Activated CD4-positive, alpha-beta T cell treated with anti-CD3 and anti-CD28 coated beads, Interleukin-2, amount 10 ng/mL, durations not matched to agents 7 days and 5 days (primary cell): ENCODE measurements at regions of chr18 and their contacts with region 1.

Region 1: DNA sequence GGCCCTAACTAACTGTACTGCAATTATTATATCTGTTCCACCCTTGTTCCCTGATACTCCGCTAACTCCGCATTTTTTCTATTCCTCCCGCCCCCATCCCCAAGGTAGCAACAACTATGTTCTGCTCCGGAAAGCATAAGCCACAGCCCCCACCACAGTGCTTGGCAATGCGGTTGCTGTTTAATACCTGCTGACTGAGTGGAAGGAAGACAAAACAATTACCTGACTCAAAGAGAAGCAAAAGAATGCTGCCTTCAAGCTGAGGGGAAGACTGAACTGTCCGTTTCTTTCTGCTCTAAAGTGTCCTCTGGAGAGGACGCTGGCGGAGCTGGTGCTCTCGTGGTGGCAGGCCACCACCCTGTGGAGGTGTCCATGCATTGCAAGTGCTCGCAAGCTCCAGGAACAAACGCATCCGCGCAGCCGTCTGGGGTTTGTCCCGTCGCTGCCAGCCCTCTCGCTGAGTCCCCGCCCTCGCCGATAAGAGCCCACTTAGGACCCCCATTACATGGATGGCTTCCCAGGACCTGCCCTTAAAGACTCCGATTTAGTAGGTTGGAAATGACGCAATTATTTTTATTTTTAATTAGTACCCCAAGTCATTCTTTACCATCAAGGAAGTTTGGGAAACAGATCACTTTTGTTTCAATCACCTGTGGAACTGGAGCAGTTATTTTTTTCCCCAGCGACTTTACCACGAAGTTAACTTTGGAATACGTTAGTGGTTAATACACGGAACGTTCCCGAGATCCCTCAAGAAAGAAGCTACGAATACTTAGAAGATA is 1.6 kb upstream of the MYL12A start:
- DNase-seq: peak; percentile 86
- H3K4me3 Mint-ChIP-seq: peak overlapping the region; percentile 88
- H3K27ac Mint-ChIP-seq: peak overlapping the region; percentile 99
- H3K4me1 Mint-ChIP-seq: peaks cover 23% of the 10 kb centered on the region
- H3K27me3 Mint-ChIP-seq: no peaks in the 10 kb centered on the region

Region 2: GRCh38 chr18:2948038-2948437 is 298.0 kb before region 1 on chr18:
- CTCF ChIA-PET with region 1: interaction called, 10 read pairs
- POLR2A ChIA-PET with region 1: no interaction called
- DNase-seq: no peak
- H3K4me3 Mint-ChIP-seq: no peak overlapping the region
- H3K27ac Mint-ChIP-seq: no peak overlapping the region
- H3K4me1 Mint-ChIP-seq: peaks cover 46% of the 10 kb centered on the region
- H3K27me3 Mint-ChIP-seq: no peaks in the 10 kb centered on the region

Region 3: GRCh38 chr18:2958819-2959298 is 287.2 kb before region 1 on chr18:
- CTCF ChIA-PET with region 1: interaction called, 10 read pairs
- POLR2A ChIA-PET with region 1: interaction called, 4 read pairs
- DNase-seq: peak; percentile 65
- H3K4me3 Mint-ChIP-seq: peak overlapping the region; percentile 69
- H3K27ac Mint-ChIP-seq: peak overlapping the region; percentile 97
- H3K4me1 Mint-ChIP-seq: peaks cover 91% of the 10 kb centered on the region
- H3K27me3 Mint-ChIP-seq: no peaks in the 10 kb centered on the region

Region 4: GRCh38 chr18:3151399-3152264 is 94.4 kb before region 1 on chr18:
- CTCF ChIA-PET with region 1: interaction called, 13 read pairs
- POLR2A ChIA-PET with region 1: interaction called, 3 read pairs
- DNase-seq: peak; percentile 8
- H3K4me3 Mint-ChIP-seq: no peak overlapping the region
- H3K27ac Mint-ChIP-seq: no peak overlapping the region
- H3K4me1 Mint-ChIP-seq: peaks cover 7% of the 10 kb centered on the region
- H3K27me3 Mint-ChIP-seq: peaks cover 7% of the 10 kb centered on the region

Region 5: DNA sequence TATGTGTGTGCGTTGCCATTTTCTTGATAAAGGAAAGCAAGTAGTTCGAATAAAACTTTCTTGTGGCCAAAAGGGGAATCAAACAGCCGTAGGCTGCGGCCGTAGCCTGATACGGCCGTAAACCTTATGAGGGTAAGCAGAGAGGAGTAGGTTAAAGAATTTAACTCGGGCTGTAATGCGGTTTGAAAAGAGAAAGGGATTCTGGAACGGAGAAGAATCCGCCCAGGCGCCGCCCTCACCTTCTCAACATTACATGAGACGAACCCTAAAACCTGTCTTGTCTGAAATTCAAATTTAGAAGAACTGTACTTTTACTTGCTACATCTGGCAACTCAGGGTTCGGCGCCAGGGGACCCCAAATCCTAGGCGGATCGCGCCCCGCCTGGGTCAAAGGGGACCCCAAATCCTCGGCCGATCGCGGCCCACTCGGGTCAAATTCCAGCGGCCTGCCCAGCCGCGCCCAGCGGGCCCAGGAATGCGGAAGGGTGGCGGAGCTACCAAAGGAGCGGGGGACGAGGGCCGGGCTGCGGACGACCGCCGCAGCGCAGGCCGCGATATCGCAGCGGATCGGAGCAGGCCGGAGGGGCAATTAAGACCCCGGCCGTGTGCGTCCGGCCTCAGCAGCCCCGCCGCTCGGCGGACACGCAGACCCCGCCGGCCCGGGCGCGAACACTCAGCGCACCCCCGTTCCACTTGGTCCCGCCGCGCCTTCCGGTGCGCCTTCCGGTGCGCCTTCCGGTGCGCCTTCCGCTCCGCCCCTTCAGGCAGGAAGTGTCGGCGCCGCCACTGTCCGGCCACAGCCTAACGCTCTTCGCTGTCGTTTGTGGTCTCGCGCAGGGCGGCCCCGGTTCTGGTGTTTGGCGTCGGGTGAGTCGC is 15.6 kb after region 1 on chr18 and contains the start of gene MYL12B:
- CTCF ChIA-PET with region 1: interaction called, 4 read pairs
- POLR2A ChIA-PET with region 1: interaction called, 11 read pairs
- DNase-seq: peak; percentile 82
- H3K4me3 Mint-ChIP-seq: peak within 1 kb of the TSS; percentile 86
- H3K27ac Mint-ChIP-seq: peak within 1 kb of the TSS; percentile 99
- H3K4me1 Mint-ChIP-seq: peaks cover 76% of the 10 kb centered on the region
- H3K27me3 Mint-ChIP-seq: no peaks in the 10 kb centered on the region
- total RNA-seq, gene MYL12B: 351 to 395 TPM

Region 6: GRCh38 chr18:3283908-3284307 is 37.9 kb after region 1 on chr18:
- CTCF ChIA-PET with region 1: no interaction called
- POLR2A ChIA-PET with region 1: no interaction called
- DNase-seq: no peak
- H3K4me3 Mint-ChIP-seq: no peak overlapping the region
- H3K27ac Mint-ChIP-seq: no peak overlapping the region
- H3K4me1 Mint-ChIP-seq: no peaks in the 10 kb centered on the region
- H3K27me3 Mint-ChIP-seq: peaks cover 2% of the 10 kb centered on the region